HCT116 (cell line): ENCODE measurements at regions of chr15 and their contacts with region 1.

Region 1: GRCh38 chr15:59283717-59284336 is 77.2 kb downstream of the LDHAL6B start:
- DNase-seq: peak; percentile 84
- ATAC-seq: peak; percentile 85
- H3K4me3 ChIP-seq: peak overlapping the region in 1 of 2 experiments; percentile 40; a peak in 2 of 4 replicates
- H3K27ac ChIP-seq: peak overlapping the region; percentile 68
- H3K4me1 ChIP-seq: peaks cover 48 to 83% of the 10 kb centered on the region in 2 experiments
- H3K27me3 ChIP-seq: no peaks in the 10 kb centered on the region
- CTCF ChIP-seq: no peak
- POLR2A ChIP-seq: no peak
- RAD21 ChIP-seq: peak; percentile 29; the same call in 1 of the 2 replicates

Region 2: GRCh38 chr15:59299929-59300617 is 16.2 kb after region 1 on chr15:
- CTCF ChIA-PET with region 1: interaction called, 4 read pairs
- POLR2A ChIA-PET with region 1: interaction called, 11 read pairs
- RAD21 ChIA-PET with region 1: interaction called, 3 read pairs
- intact Hi-C with region 1: no loop called
- DNase-seq: peak; percentile 86
- ATAC-seq: peak; percentile 62
- H3K4me3 ChIP-seq: peak overlapping the region; percentile 8 to 44; a peak in 3 of 4 replicates
- H3K27ac ChIP-seq: peak overlapping the region; percentile 62
- H3K4me1 ChIP-seq: peaks cover 78 to 99% of the 10 kb centered on the region in 2 experiments
- H3K27me3 ChIP-seq: no peaks in the 10 kb centered on the region
- CTCF ChIP-seq: no peak
- POLR2A ChIP-seq: no peak
- RAD21 ChIP-seq: peak; percentile 26; the same call in 1 of the 2 replicates